Head of caudate nucleus (tissue), 42 donors: ENCODE measurements at regions of chr7 and their contacts with region 1.

Region 1: DNA sequence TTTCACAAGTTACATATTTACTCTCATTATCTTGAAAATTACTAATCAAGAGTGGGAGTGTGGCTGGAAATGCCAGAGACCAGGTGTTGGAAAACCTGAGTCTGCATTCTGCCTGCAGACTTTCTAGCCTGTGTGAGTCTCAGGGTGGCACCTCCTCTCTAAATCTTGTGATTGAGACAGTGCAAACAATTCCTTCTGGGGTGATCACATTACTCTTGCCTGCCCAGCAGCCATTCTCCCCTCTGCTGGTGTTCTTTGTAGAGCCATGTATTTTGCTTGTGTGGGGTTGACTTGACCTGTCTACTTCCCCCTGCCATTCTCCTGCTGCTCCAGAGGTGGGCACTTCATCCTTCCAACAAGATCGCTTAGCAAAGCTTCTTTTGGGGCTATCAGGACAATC is 101.1 kb downstream of the RAPGEF5 start:
- DNase-seq: peak in 5 of 42 donors; percentile 13 to 62 (median 34)

Region 2: GRCh38 chr7:22110227-22110839 is 145.5 kb before region 1 on chr7:
- intact Hi-C with region 1: loop called (anchors 2 kb)
- DNase-seq: peak; percentile 30 to 95 (median 86)

Region 3: DNA sequence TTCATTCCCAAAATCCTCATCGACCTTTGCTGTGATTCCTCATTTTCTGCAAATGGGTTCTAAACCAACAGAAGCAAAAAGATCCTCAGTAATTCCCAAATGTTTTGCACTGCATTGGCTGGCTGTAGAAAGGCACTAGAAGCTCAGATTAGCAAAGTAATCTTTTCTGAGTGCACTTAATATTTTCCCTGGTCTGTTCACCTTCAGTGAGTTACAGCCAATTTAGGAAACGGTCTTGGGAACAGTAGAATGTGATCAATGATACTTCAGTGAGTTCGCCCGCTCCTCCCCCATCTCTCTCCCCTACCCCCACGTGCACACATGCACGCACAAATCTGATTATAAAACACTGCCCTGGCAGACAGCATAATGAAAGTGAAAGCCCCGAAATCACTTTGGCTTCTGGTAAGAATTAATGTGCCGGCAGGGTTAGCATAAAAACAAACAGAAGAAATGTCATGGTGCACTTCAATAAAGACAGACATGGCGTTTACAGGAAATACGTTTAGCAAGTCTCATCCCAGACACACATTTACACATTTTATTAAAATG is 108.8 kb before region 1 on chr7:
- intact Hi-C with region 1: loop called (anchors 10 kb)
- DNase-seq: no peak

Region 4: DNA sequence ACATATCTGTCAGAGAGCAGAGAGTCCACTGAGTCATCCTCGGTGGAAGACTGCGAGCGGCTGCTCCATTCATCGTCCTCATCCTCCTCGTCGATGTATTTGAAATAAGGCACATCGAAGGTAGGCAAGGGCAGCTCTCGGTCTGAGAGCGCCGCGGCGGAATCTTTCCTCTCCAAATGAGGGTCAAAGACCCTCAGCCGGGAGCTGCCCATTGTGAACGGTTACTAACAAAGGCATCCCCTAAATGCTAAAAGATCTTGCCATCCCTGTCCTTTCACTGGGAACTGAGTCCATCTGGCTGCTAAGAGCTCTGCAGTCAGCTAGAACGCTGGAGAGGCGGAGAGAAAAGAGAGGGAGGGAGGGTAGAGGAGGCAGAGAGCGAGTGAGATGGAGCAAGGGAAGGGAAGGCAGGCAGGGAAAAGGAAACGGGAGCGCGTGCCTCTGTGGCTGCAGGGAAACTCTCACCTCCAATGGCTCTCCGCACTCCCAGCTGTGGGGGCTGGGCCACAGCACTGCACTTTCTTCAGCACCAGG is 62.3 kb before region 1 on chr7:
- intact Hi-C with region 1: loop called (anchors 2 kb)
- DNase-seq: peak; percentile 48 to 92 (median 78)

Region 5: GRCh38 chr7:22726345-22727185 is 470.7 kb after region 1 on chr7:
- intact Hi-C with region 1: no loop called
- DNase-seq: peak in 38 of 42 donors; percentile 7 to 80 (median 46)